ENCODE measurements at regions of chr1 and their contacts with region 1.

Region 1: GRCh38 chr1:222582099-222582774 is 7.5 kb downstream of the TAF1A start:
- DNase-seq: peak; percentile 97
- ATAC-seq: peak; percentile 91
- H3K4me3 ChIP-seq: peak overlapping the region; percentile 13
- H3K27ac ChIP-seq: peak overlapping the region; percentile 35
- H3K4me1 ChIP-seq: peaks cover 39% of the 10 kb centered on the region
- H3K27me3 ChIP-seq: no peaks in the 10 kb centered on the region
- CTCF ChIP-seq: no peak

Region 2: GRCh38 chr1:221897321-221897721 is 684.9 kb before region 1 on chr1:
- CTCF ChIA-PET with region 1: no interaction called
- POLR2A ChIA-PET with region 1: no interaction called
- intact Hi-C with region 1: loop called (anchors 5 kb)
- DNase-seq: peak; percentile 65
- ATAC-seq: peak; percentile 69
- H3K4me3 ChIP-seq: no peak overlapping the region
- H3K27ac ChIP-seq: no peak overlapping the region
- H3K4me1 ChIP-seq: peaks cover 10% of the 10 kb centered on the region
- H3K27me3 ChIP-seq: no peaks in the 10 kb centered on the region
- CTCF ChIP-seq: no peak

Region 3: GRCh38 chr1:222521299-222522104 is 60.7 kb before region 1 on chr1:
- CTCF ChIA-PET with region 1: no interaction called
- POLR2A ChIA-PET with region 1: no interaction called
- intact Hi-C with region 1: no loop called
- DNase-seq: peak; percentile 95
- ATAC-seq: peak; percentile 74
- H3K4me3 ChIP-seq: no peak overlapping the region
- H3K27ac ChIP-seq: peak overlapping the region; percentile 78
- H3K4me1 ChIP-seq: peaks cover 22% of the 10 kb centered on the region
- H3K27me3 ChIP-seq: no peaks in the 10 kb centered on the region
- CTCF ChIP-seq: no peak

Region 4: GRCh38 chr1:222561656-222562055 is 20.6 kb before region 1 on chr1:
- CTCF ChIA-PET with region 1: no interaction called
- POLR2A ChIA-PET with region 1: no interaction called
- intact Hi-C with region 1: loop called (anchors 2 kb)
- DNase-seq: no peak
- ATAC-seq: peak; percentile 71
- H3K4me3 ChIP-seq: no peak overlapping the region
- H3K27ac ChIP-seq: no peak overlapping the region
- H3K4me1 ChIP-seq: no peaks in the 10 kb centered on the region
- H3K27me3 ChIP-seq: no peaks in the 10 kb centered on the region
- CTCF ChIP-seq: no peak

Region 5: GRCh38 chr1:222600281-222600680 is 18.0 kb after region 1 on chr1:
- CTCF ChIA-PET with region 1: no interaction called
- POLR2A ChIA-PET with region 1: no interaction called
- intact Hi-C with region 1: loop called (anchors 1 kb)
- DNase-seq: peak; percentile 92
- ATAC-seq: peak; percentile 87
- H3K4me3 ChIP-seq: peak overlapping the region; percentile 1; the same call in 1 of the 2 replicates
- H3K27ac ChIP-seq: peak overlapping the region; percentile 70
- H3K4me1 ChIP-seq: peaks cover 32% of the 10 kb centered on the region
- H3K27me3 ChIP-seq: no peaks in the 10 kb centered on the region
- CTCF ChIP-seq: no peak

Region 6: DNA sequence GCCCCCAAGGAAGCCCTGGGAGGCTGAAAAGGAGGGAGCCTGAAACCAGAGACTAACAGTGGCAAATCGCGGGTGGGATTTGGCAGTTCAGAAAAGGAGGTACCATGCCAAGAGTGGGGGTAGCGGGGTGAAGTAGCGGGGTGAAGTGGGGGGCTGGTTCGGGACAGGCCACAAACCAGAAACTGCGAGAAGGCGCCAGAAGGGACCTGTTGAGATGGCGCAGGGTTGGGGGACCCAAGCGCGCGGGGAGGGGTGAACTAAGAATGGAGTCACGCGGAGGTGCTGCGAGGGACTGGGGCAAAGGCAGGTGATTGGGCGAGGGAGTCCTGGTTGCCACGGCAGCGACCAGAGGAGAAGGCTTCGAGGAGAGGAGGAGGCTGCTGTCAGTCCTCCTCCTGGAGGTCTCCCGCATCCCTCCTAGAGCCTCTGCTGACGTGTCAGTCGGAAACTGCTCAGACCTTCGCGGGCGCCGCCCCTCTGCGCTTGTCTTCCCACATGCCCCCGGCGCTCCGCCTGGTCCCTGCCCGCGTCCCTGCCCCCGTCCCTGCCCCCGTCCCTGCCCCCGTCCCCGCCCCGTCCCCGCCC is 35.2 kb after region 1 on chr1:
- CTCF ChIA-PET with region 1: no interaction called
- POLR2A ChIA-PET with region 1: no interaction called
- intact Hi-C with region 1: loop called (anchors 1 kb)
- DNase-seq: peak; percentile 90
- ATAC-seq: peak; percentile 86
- H3K4me3 ChIP-seq: peak overlapping the region; percentile 61
- H3K27ac ChIP-seq: no peak overlapping the region
- H3K4me1 ChIP-seq: peaks cover 13% of the 10 kb centered on the region
- H3K27me3 ChIP-seq: no peaks in the 10 kb centered on the region
- CTCF ChIP-seq: no peak

Region 7: GRCh38 chr1:222634180-222635013 is 52.2 kb after region 1 on chr1:
- CTCF ChIA-PET with region 1: interaction called, 7 read pairs
- POLR2A ChIA-PET with region 1: interaction called, 4 read pairs
- intact Hi-C with region 1: loop called (anchors 1 kb)
- DNase-seq: peak; percentile 100
- ATAC-seq: peak; percentile 76
- H3K4me3 ChIP-seq: no peak overlapping the region
- H3K27ac ChIP-seq: no peak overlapping the region
- H3K4me1 ChIP-seq: no peaks in the 10 kb centered on the region
- H3K27me3 ChIP-seq: no peaks in the 10 kb centered on the region
- CTCF ChIP-seq: peak; percentile 99

Region 8: DNA sequence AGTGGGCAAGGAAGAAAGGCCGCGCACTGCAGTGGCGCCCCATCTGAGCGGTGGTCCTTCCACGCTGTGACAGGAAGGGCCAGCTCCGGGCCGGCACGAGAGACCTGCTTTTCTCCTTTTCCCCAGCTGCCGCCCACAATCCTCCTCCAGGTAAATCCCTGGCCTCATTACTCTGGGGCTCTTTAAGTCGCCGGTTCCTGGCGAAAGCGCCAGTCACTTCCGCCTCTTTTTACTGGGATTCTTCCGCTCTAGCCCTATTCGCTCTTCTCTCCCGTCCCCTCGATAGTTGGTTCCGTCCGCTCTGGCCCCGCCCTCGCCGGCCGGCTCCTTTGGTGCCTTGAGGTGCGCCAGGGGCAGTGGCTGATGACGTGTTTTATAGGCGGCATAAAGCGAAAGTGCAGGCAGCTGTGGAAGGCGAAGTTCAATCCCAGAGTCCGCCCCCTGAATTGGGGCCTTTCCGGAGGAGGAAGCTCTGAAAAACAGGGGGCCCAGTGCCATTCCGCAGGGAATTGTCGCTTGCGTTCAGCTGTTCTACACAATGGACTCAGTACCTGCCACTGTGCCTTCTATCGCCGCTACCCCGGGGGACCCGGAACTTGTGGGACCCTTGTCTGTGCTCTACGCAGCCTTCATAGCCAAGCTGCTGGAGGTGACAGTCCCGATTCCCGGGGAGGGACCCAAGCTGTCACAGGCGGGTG is 61.9 kb after region 1 on chr1:
- CTCF ChIA-PET with region 1: no interaction called
- POLR2A ChIA-PET with region 1: interaction called, 3 read pairs
- intact Hi-C with region 1: loop called (anchors 2 kb)
- DNase-seq: peak; percentile 100
- ATAC-seq: peak; percentile 93
- H3K4me3 ChIP-seq: peak overlapping the region; percentile 89
- H3K27ac ChIP-seq: peak overlapping the region; percentile 77
- H3K4me1 ChIP-seq: peaks cover 32% of the 10 kb centered on the region
- H3K27me3 ChIP-seq: no peaks in the 10 kb centered on the region
- CTCF ChIP-seq: no peak

Region 9: DNA sequence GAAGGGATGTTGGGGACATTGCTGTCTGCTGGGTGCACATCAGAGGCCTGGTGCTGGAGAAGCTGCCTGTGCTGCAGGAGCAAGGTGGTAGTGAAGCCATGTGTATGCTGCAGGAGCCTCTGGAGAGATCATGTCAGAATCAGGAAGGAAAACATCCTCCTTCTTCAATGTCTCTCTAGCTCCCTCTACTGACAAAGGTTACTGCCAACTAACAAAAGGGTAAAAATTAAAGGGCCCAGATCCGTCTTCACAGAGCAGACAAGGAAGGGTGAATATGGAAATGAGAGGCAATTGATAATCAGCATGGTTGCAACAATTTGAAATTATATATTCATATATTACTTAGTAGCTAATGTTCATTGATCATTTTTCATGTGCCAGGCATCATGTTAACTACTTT is 186.9 kb after region 1 on chr1:
- CTCF ChIA-PET with region 1: no interaction called
- POLR2A ChIA-PET with region 1: no interaction called
- intact Hi-C with region 1: no loop called
- DNase-seq: no peak
- ATAC-seq: no peak
- H3K4me3 ChIP-seq: no peak overlapping the region
- H3K27ac ChIP-seq: no peak overlapping the region
- H3K4me1 ChIP-seq: peaks cover 12% of the 10 kb centered on the region
- H3K27me3 ChIP-seq: no peaks in the 10 kb centered on the region
- CTCF ChIP-seq: peak; percentile 49